ENCODE measurements at regions of chr16 and their contacts with region 1.

Region 1: GRCh38 chr16:27426423-27427408 is 24.7 kb downstream of the IL21R start:
- DNase-seq: peak; percentile 93
- ATAC-seq: peak; percentile 89
- H3K4me3 ChIP-seq: peak overlapping the region; percentile 66
- H3K27ac ChIP-seq: peak overlapping the region; percentile 88
- H3K4me1 ChIP-seq: peaks cover 81% of the 10 kb centered on the region
- H3K27me3 ChIP-seq: no peaks in the 10 kb centered on the region
- CTCF ChIP-seq: peak in 2 of 3 experiments; percentile 22 to 42; a peak in 1 of 6 replicates
- EP300 ChIP-seq: peak in 1 of 2 experiments; percentile 80; a peak in 2 of 4 replicates
- POLR2A ChIP-seq: peak; percentile 89
- RAD21 ChIP-seq: no peak

Region 2: DNA sequence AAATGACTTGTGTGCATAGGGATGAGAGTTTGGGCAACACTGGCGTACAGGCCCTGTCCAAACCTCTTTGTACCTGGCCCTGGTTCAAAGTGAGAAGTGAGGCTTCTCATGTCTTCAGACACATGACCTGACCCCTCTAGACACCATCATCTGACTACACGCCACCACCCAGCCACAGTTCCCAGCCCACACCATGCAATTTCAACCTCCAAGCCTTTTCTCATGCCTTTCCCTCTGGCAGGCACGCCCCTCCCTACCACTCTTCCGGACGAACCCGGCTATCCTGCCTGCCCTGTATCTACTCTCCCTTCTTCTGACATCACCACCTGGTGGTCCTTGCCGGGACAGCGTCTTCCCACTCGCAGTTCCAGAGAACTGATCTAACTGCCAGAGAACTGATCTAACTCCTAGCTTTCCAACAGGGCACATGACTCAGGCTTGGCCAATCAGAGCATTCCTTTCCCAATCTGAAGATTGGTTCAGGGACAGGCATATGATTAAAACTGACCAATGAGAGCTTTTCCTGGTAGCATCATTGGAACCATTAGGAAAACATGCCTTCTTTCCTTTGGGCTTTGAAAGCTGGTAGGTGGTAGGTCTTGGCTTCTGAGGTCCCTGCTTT is 51.8 kb before region 1 on chr16:
- CTCF ChIA-PET with region 1: interaction called, 17 read pairs
- POLR2A ChIA-PET with region 1: interaction called, 13 read pairs
- RAD21 ChIA-PET with region 1: interaction called, 34 read pairs
- SMC1A ChIA-PET with region 1: interaction called, 14 read pairs
- in situ Hi-C with region 1: no loop called
- intact Hi-C with region 1: loop called (anchors 2 kb)
- DNase-seq: peak; percentile 90
- ATAC-seq: peak; percentile 72
- H3K4me3 ChIP-seq: peak overlapping the region; percentile 56
- H3K27ac ChIP-seq: peak overlapping the region; percentile 72
- H3K4me1 ChIP-seq: peaks cover 61% of the 10 kb centered on the region
- H3K27me3 ChIP-seq: no peaks in the 10 kb centered on the region
- CTCF ChIP-seq: peak; percentile 39 to 50 (median 42); a peak in 4 of 6 replicates
- EP300 ChIP-seq: no peak
- POLR2A ChIP-seq: peak; percentile 77
- RAD21 ChIP-seq: peak; percentile 37; the same call in 1 of the 2 replicates

Region 3: DNA sequence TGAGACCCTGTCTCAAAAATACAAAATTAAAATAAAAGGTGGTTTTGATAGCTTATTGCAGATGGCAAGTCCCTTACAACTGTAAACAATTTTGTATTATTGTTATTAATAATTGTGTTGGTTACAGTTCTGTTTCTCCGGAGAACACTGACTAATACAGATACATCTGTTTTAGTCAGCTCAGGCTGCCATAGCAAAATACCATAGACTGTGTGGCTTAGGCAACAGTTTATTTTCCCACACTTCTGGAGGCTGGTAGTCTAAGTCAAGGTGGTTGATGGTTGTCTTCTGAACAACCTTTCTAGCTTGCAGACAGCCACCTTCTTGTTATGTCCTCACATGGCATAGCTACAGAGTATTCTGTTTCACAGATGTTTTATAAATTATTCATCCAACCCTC is 39.0 kb before region 1 on chr16:
- CTCF ChIA-PET with region 1: interaction called, 8 read pairs
- POLR2A ChIA-PET with region 1: interaction called, 7 read pairs
- RAD21 ChIA-PET with region 1: interaction called, 3 read pairs
- SMC1A ChIA-PET with region 1: interaction called, 10 read pairs
- in situ Hi-C with region 1: no loop called
- intact Hi-C with region 1: no loop called
- DNase-seq: peak; percentile 74
- ATAC-seq: peak; percentile 88
- H3K4me3 ChIP-seq: no peak overlapping the region
- H3K27ac ChIP-seq: peak overlapping the region; percentile 54
- H3K4me1 ChIP-seq: peaks cover 37% of the 10 kb centered on the region
- H3K27me3 ChIP-seq: no peaks in the 10 kb centered on the region
- CTCF ChIP-seq: no peak
- EP300 ChIP-seq: peak; percentile 65 to 95; a peak in 2 of 4 replicates
- POLR2A ChIP-seq: no peak
- RAD21 ChIP-seq: no peak

Region 4: GRCh38 chr16:27401768-27402568 is 24.7 kb before region 1 on chr16 and contains the start of gene IL21R:
- CTCF ChIA-PET with region 1: interaction called, 113 read pairs
- POLR2A ChIA-PET with region 1: interaction called, 28 read pairs
- RAD21 ChIA-PET with region 1: interaction called, 106 read pairs
- SMC1A ChIA-PET with region 1: interaction called, 161 read pairs
- in situ Hi-C with region 1: no loop called
- intact Hi-C with region 1: loop called (anchors 1 kb)
- DNase-seq: peak; percentile 85
- ATAC-seq: peak; percentile 56
- H3K4me3 ChIP-seq: peak within 1 kb of the TSS; percentile 86
- H3K27ac ChIP-seq: peak within 1 kb of the TSS; percentile 97
- H3K4me1 ChIP-seq: peaks cover 53% of the 10 kb centered on the region
- H3K27me3 ChIP-seq: no peaks in the 10 kb centered on the region
- CTCF ChIP-seq: no peak
- EP300 ChIP-seq: peak in 1 of 2 experiments; percentile 73; a peak in 2 of 4 replicates
- POLR2A ChIP-seq: peak; percentile 95
- RAD21 ChIP-seq: 0 out of 2 replicates have a peak, but pooled peaks have one; percentile 7
- polyA plus RNA-seq, gene IL21R: 5.3 to 9.7 TPM

Region 5: DNA sequence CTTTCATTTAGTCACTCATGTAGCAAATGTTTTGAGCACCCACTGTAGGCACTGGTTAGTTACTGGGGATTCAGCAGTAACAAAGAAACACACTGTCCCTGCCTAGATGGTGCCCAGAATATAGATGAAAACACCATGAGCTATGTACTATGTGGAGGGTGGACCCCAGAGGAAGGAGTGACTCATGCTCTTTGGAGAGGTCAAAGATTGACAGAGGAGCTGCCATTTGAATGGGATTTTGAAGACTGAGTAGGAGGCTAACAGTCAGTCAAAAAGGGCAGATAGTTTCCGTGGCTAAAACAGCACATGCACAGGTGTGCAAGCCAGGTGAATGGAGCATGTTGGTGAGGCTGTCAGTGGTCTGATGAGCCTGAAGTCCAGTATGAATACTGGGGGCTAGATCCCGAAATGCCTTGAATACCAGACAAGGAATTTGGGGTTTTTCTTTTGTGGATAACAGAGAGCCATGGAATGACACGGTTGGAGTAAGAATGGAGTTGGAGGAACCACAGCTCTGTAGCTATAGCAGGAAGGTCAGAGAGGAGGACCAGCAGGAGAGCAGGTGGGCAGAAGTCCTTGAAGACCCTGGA is 18.6 kb before region 1 on chr16:
- CTCF ChIA-PET with region 1: interaction called, 113 read pairs
- POLR2A ChIA-PET with region 1: interaction called, 28 read pairs
- RAD21 ChIA-PET with region 1: interaction called, 106 read pairs
- SMC1A ChIA-PET with region 1: interaction called, 161 read pairs
- in situ Hi-C with region 1: no loop called
- intact Hi-C with region 1: loop called (anchors 1 kb)
- DNase-seq: peak; percentile 76
- ATAC-seq: peak; percentile 51
- H3K4me3 ChIP-seq: peak overlapping the region; percentile 86
- H3K27ac ChIP-seq: peak overlapping the region; percentile 97
- H3K4me1 ChIP-seq: peaks cover 28% of the 10 kb centered on the region
- H3K27me3 ChIP-seq: no peaks in the 10 kb centered on the region
- CTCF ChIP-seq: no peak
- EP300 ChIP-seq: peak in 1 of 2 experiments; percentile 11; a peak in 1 of 4 replicates
- POLR2A ChIP-seq: peak; percentile 53; the same call in 1 of the 2 replicates
- RAD21 ChIP-seq: no peak

Region 6: GRCh38 chr16:27436921-27437650 is 10.4 kb after region 1 on chr16:
- CTCF ChIA-PET with region 1: interaction called, 10 read pairs
- POLR2A ChIA-PET with region 1: interaction called, 6 read pairs
- RAD21 ChIA-PET with region 1: no interaction called
- SMC1A ChIA-PET with region 1: interaction called, 9 read pairs
- in situ Hi-C with region 1: no loop called
- intact Hi-C with region 1: no loop called
- DNase-seq: no peak
- ATAC-seq: no peak
- H3K4me3 ChIP-seq: no peak overlapping the region
- H3K27ac ChIP-seq: no peak overlapping the region
- H3K4me1 ChIP-seq: peaks cover 8% of the 10 kb centered on the region
- H3K27me3 ChIP-seq: no peaks in the 10 kb centered on the region
- CTCF ChIP-seq: no peak
- EP300 ChIP-seq: no peak
- POLR2A ChIP-seq: peak; percentile 58
- RAD21 ChIP-seq: no peak

Region 7: GRCh38 chr16:27449434-27450195 is 22.9 kb after region 1 on chr16:
- CTCF ChIA-PET with region 1: interaction called, 20 read pairs
- POLR2A ChIA-PET with region 1: interaction called, 35 read pairs
- RAD21 ChIA-PET with region 1: interaction called, 31 read pairs
- SMC1A ChIA-PET with region 1: interaction called, 48 read pairs
- in situ Hi-C with region 1: no loop called
- intact Hi-C with region 1: no loop called
- DNase-seq: no peak
- ATAC-seq: peak; percentile 79
- H3K4me3 ChIP-seq: no peak overlapping the region
- H3K27ac ChIP-seq: peak overlapping the region; percentile 66
- H3K4me1 ChIP-seq: peaks cover 57% of the 10 kb centered on the region
- H3K27me3 ChIP-seq: no peaks in the 10 kb centered on the region
- CTCF ChIP-seq: no peak
- EP300 ChIP-seq: peak; percentile 81; a peak in 3 of 4 replicates
- POLR2A ChIP-seq: peak; percentile 76
- RAD21 ChIP-seq: 0 out of 2 replicates have a peak, but pooled peaks have one; percentile 1

Measured in GM12878 (cell line).